Naive thymus-derived CD4-positive, alpha-beta T cell (primary cell): ENCODE measurements at regions of chr13 and their contacts with region 1.

Region 1: GRCh38 chr13:81133066-81133465 is 792.1 kb upstream of the SPRY2 start:
- DNase-seq: no peak
- ATAC-seq: no peak
- H3K4me3 ChIP-seq: no peak overlapping the region
- H3K4me3 Mint-ChIP-seq: no peak overlapping the region
- H3K27ac ChIP-seq: no peak overlapping the region
- H3K27ac Mint-ChIP-seq: no peak overlapping the region
- H3K4me1 ChIP-seq: no peaks in the 10 kb centered on the region
- H3K4me1 Mint-ChIP-seq: no peaks in the 10 kb centered on the region
- H3K27me3 ChIP-seq: no peaks in the 10 kb centered on the region
- H3K27me3 Mint-ChIP-seq: no peaks in the 10 kb centered on the region

Region 2: GRCh38 chr13:81106348-81106747 is 26.7 kb before region 1 on chr13:
- CTCF ChIA-PET with region 1: no interaction called
- POLR2A ChIA-PET with region 1: no interaction called
- intact Hi-C with region 1: loop called in 1 of 2 experiments (anchors 2 kb)
- DNase-seq: no peak
- ATAC-seq: no peak
- H3K4me3 ChIP-seq: no peak overlapping the region
- H3K4me3 Mint-ChIP-seq: no peak overlapping the region
- H3K27ac ChIP-seq: no peak overlapping the region
- H3K27ac Mint-ChIP-seq: no peak overlapping the region
- H3K4me1 ChIP-seq: no peaks in the 10 kb centered on the region
- H3K4me1 Mint-ChIP-seq: no peaks in the 10 kb centered on the region
- H3K27me3 ChIP-seq: no peaks in the 10 kb centered on the region
- H3K27me3 Mint-ChIP-seq: no peaks in the 10 kb centered on the region

Region 3: DNA sequence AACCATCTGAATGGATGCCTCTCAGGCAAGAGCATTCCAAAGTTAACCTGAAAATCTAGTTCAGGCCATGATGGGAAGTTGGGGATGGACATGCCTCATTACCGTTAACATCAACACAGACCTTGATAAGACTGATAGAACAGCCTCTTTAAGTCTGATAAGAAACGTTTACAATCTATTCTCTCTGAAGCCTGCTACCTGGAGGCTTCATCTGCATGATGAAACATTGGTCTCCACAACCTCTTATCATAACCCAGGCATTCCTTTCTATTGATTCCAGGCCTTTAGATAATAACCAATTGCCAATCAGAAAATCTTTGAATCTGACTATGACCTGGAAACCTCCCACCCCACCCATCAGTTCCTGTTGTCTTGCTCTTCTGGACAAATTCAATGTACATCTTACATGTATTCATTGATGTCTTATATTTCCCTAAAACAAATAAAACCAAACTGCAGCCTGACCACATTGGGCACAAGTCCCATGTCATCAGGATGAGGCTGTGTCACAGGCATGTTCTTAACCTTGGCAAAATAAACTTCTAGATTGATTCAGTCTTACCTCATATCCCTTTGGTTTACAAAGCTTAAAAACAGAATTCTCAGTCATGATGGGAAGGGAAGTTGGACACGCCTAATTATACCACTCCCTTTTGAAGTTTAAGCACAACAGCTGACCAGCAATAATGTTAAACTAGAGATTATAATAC is 51.6 kb after region 1 on chr13:
- CTCF ChIA-PET with region 1: no interaction called
- POLR2A ChIA-PET with region 1: no interaction called
- intact Hi-C with region 1: no loop called
- DNase-seq: no peak
- ATAC-seq: no peak
- H3K4me3 ChIP-seq: no peak overlapping the region
- H3K4me3 Mint-ChIP-seq: no peak overlapping the region
- H3K27ac ChIP-seq: no peak overlapping the region
- H3K27ac Mint-ChIP-seq: no peak overlapping the region
- H3K4me1 ChIP-seq: no peaks in the 10 kb centered on the region
- H3K4me1 Mint-ChIP-seq: no peaks in the 10 kb centered on the region
- H3K27me3 ChIP-seq: no peaks in the 10 kb centered on the region
- H3K27me3 Mint-ChIP-seq: no peaks in the 10 kb centered on the region